Mammary epithelial cell (primary cell): ENCODE measurements at regions of chr9 and their contacts with region 1.

Region 1: GRCh38 chr9:118097507-118097906 is 393.3 kb downstream of the TLR4 start:
- DNase-seq: no peak
- H3K4me3 ChIP-seq: no peak overlapping the region
- H3K27ac ChIP-seq: no peak overlapping the region
- H3K4me1 ChIP-seq: no peaks in the 10 kb centered on the region
- H3K27me3 ChIP-seq: no peaks in the 10 kb centered on the region
- CTCF ChIP-seq: no peak

Region 2: GRCh38 chr9:118156846-118157245 is 59.3 kb after region 1 on chr9:
- CTCF ChIA-PET with region 1: no interaction called
- dilution Hi-C with region 1: loop called (anchors 5 kb)
- in situ Hi-C with region 1: no loop called
- intact Hi-C with region 1: no loop called
- DNase-seq: no peak
- H3K4me3 ChIP-seq: no peak overlapping the region
- H3K27ac ChIP-seq: no peak overlapping the region
- H3K4me1 ChIP-seq: no peaks in the 10 kb centered on the region
- H3K27me3 ChIP-seq: no peaks in the 10 kb centered on the region
- CTCF ChIP-seq: no peak